HEK293 (cell line): ENCODE measurements at regions of chr6 and their contacts with region 1.

Region 1: DNA sequence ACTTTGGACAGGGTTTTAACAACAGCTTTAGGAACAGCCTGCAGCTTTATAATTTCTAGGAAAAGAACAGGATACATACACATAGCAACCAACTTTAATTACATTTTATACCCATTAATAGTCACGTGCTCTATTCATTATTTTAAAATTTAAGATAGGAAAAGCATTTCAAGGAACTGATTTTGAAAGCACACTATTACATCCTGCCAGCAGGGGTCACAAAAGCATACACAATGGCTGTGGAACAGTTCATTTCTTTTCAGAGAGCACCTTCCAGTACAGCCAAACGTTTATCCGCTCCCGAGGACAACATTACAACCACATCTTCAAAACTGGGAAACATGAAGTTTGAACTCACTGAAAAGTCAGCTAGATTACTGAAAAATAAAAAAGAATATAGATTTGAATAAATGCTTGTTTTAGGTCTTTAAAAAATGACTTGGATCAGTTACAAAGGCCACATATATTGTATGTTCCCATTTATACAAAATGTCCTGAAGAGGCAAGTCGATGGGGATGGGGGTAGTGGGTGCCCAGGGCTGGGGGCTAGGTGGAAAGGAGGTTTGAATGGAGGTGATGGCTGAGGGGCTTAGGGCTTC is 104.6 kb upstream of the EXOC2 start:
- H3K4me3 ChIP-seq: no peak overlapping the region
- H3K27ac ChIP-seq: no peak overlapping the region
- H3K4me1 ChIP-seq: no peaks in the 10 kb centered on the region
- CTCF ChIP-seq: peak; percentile 33; the same call in 1 of the 2 replicates

Region 2: GRCh38 chr6:514396-514973 is 283.1 kb before region 1 on chr6:
- CTCF ChIA-PET with region 1: no interaction called
- POLR2A ChIA-PET with region 1: no interaction called
- H3K4me3 ChIP-seq: no peak overlapping the region
- H3K27ac ChIP-seq: no peak overlapping the region
- H3K4me1 ChIP-seq: no peaks in the 10 kb centered on the region
- CTCF ChIP-seq: no peak

Region 3: GRCh38 chr6:811831-812230 is 14.3 kb after region 1 on chr6:
- CTCF ChIA-PET with region 1: interaction called, 24 read pairs
- POLR2A ChIA-PET with region 1: no interaction called
- H3K4me3 ChIP-seq: no peak overlapping the region
- H3K27ac ChIP-seq: no peak overlapping the region
- H3K4me1 ChIP-seq: no peaks in the 10 kb centered on the region
- CTCF ChIP-seq: no peak

Region 4: DNA sequence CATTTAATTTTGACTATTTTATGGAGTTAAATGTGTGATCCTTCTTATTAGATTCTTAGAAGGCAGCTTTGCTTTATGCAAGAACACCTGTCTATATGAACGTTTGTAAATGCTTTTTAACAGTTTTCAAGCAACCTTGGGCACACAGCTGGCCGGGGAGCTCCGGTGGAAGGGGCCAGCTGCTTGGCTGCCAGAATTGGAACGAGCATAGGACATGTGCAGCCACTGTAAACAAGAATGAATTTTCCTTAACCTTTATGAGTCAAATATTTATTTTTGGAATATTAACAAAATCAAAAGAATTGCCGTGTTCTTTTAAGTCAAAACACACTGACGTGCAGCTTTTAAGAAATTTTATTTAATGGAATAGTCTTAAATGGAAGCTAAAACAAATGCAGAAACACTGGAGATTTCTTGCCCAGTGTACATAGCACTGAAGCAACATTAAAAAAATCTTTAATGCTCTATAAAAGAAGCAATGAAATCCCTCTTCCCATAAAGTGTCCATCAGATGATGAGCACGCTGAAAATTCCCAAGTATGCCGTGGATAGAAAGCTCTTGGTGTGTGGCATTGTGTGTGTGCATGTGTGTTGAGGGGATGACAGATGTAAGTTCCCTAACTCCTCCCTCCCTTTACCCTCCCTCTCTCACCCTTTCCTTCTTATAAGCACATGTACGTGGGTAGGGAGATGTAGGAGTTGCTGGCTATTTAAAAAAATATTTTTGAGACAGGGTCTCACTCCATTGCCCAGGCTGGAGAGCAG is 104.3 kb after region 1 on chr6:
- CTCF ChIA-PET with region 1: interaction called, 10 read pairs
- POLR2A ChIA-PET with region 1: no interaction called
- H3K4me3 ChIP-seq: no peak overlapping the region
- H3K27ac ChIP-seq: no peak overlapping the region
- H3K4me1 ChIP-seq: no peaks in the 10 kb centered on the region
- CTCF ChIP-seq: no peak

Region 5: GRCh38 chr6:1381481-1382330 is 584.1 kb after region 1 on chr6:
- CTCF ChIA-PET with region 1: interaction called, 12 read pairs
- POLR2A ChIA-PET with region 1: no interaction called
- H3K4me3 ChIP-seq: peak overlapping the region; percentile 46
- H3K27ac ChIP-seq: peak overlapping the region; percentile 63; the same call in 1 of the 2 replicates
- H3K4me1 ChIP-seq: no peaks in the 10 kb centered on the region; the same call in 1 of the 2 replicates
- CTCF ChIP-seq: peak; percentile 99

Region 6: GRCh38 chr6:1436334-1437306 is 639.0 kb after region 1 on chr6:
- CTCF ChIA-PET with region 1: interaction called, 22 read pairs
- POLR2A ChIA-PET with region 1: no interaction called
- H3K4me3 ChIP-seq: no peak overlapping the region
- H3K27ac ChIP-seq: no peak overlapping the region
- H3K4me1 ChIP-seq: peaks cover 4% of the 10 kb centered on the region
- CTCF ChIP-seq: peak; percentile 82